ENCODE measurements at regions of chr14 and their contacts with region 1.

Region 1: GRCh38 chr14:65290830-65291229 is 121.7 kb upstream of the FUT8 start:
- DNase-seq: no peak
- ATAC-seq: peak in 2 of 4 donors; percentile 28 to 31
- H3K4me3 ChIP-seq: no peak overlapping the region
- H3K27ac ChIP-seq: no peak overlapping the region
- H3K4me1 ChIP-seq: no peaks in the 10 kb centered on the region
- H3K27me3 ChIP-seq: no peaks in the 10 kb centered on the region
- CTCF ChIP-seq: no peak

Region 2: DNA sequence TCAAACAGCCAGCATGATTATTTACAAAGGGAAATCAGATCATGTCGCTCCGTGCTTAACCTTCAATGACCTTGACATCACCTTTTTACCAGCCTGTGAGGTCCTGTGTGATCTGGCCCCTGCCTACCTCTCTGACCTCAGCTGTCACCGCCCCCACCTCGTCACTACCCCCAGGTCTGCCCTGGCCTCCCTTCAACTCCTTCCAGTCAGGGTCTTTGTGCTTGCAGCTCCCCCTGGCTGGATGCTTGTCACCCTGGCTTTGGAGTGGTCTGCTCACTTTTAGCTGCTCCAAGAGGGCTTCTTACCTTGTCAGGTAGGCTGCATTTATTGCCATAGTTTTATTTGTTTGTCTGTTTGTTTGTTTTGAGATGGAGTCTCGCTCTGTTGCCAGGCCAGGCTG is 180.3 kb before region 1 on chr14:
- intact Hi-C with region 1: no loop called
- DNase-seq: no peak
- ATAC-seq: no peak
- H3K4me3 ChIP-seq: no peak overlapping the region
- H3K27ac ChIP-seq: no peak overlapping the region
- H3K4me1 ChIP-seq: no peaks in the 10 kb centered on the region
- H3K27me3 ChIP-seq: no peaks in the 10 kb centered on the region
- CTCF ChIP-seq: no peak

Region 3: DNA sequence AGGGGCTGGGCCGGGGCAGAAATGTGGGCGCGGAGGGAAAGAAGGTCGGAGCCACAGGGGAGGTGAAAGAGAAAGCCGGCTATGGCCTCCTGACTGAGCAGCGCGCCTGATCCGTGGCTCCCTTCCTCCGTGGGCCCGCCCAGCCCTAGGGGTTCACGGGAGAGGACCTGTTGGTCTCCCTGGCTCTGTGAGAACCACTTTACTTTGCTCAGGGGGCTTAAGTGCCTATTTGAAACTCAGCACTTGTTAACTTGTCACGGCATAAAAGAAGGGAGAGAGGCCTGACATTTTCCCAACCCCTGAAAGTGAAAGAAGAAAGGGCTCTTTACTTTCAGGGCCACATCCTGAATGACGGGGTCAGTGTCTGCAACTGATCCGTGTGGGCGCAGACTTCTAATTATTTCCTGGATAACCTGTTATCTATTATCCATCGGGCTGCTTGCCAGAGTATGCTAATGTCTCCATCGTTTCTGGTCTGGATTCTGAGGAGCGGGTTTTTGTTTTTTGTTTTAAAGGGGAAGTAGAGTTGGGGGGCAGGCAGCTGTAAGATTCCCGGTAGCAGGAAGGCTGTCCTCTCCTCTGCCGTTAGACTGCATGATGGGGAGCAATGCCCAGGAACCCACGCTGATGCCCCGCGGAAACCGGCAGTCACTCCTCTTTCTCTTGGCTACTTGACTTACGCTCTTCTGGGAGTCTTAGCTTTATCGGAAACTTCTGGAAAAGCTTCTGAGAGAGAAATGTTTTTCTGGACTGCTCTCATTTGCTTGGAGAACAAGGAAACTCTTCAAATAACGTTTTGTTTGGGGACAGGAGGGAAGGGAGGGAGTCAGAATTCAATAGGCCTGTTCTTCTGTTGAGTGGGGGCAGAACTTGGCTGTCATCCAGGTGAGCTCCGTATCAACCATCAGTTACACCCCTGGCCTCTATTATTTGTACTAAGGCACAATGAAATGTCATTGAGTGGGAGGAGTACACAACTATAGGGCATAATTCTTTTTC is 60.8 kb before region 1 on chr14:
- intact Hi-C with region 1: loop called in 1 of 3 experiments (anchors 10 kb)
- DNase-seq: peak in 4 of 6 donors; percentile 35 to 75 (median 44)
- ATAC-seq: peak in 3 of 4 donors; percentile 23 to 46 (median 32)
- H3K4me3 ChIP-seq: peak overlapping the region in 3 of 4 donors; percentile 4 to 42 (median 23)
- H3K27ac ChIP-seq: peak overlapping the region; percentile 30 to 95 (median 81)
- H3K4me1 ChIP-seq: peaks cover 25 to 63% (median 49%) of the 10 kb centered on the region in 3 donors
- H3K27me3 ChIP-seq: no peaks in the 10 kb centered on the region
- CTCF ChIP-seq: no peak

Region 4: GRCh38 chr14:65412032-65412846 is 121.4 kb after region 1 on chr14 and contains the start of gene FUT8:
- intact Hi-C with region 1: no loop called
- DNase-seq: peak; percentile 97 to 99 (median 98)
- ATAC-seq: peak; percentile 84 to 94 (median 88)
- H3K4me3 ChIP-seq: peak within 1 kb of the TSS; percentile 82 to 88 (median 86)
- H3K27ac ChIP-seq: peak within 1 kb of the TSS; percentile 90 to 97 (median 92)
- H3K4me1 ChIP-seq: peaks cover 3 to 5% (median 4%) of the 10 kb centered on the region in 3 donors
- H3K27me3 ChIP-seq: no peaks in the 10 kb centered on the region
- CTCF ChIP-seq: peak in 3 of 4 donors; percentile 19 to 46 (median 19)
- total RNA-seq, gene FUT8: 19.1 to 42.6 (median 22.6) TPM

Measured in pancreas (tissue), 10 donors.